Right ventricle myocardium superior (tissue), 1 donor: ENCODE measurements at regions of chr16 and their contacts with region 1.

Region 1: GRCh38 chr16:53054670-53055485 is at the start of gene CHD9:
- DNase-seq: peak; percentile 91
- ATAC-seq: peak; percentile 96
- total RNA-seq, gene CHD9: 39.5 TPM

Region 2: GRCh38 chr16:53091466-53092211 is 36.8 kb after region 1 on chr16:
- intact Hi-C with region 1: loop called (anchors 5 kb)
- DNase-seq: peak; percentile 80
- ATAC-seq: peak; percentile 50

Region 3: GRCh38 chr16:53130159-53131049 is 75.5 kb after region 1 on chr16:
- intact Hi-C with region 1: loop called (anchors 2 kb)
- DNase-seq: peak; percentile 98
- ATAC-seq: peak; percentile 93

Region 4: GRCh38 chr16:53159781-53160436 is 105.0 kb after region 1 on chr16:
- intact Hi-C with region 1: loop called (anchors 10 kb)
- DNase-seq: no peak
- ATAC-seq: peak; percentile 76

Region 5: GRCh38 chr16:53207810-53208752 is 153.2 kb after region 1 on chr16:
- intact Hi-C with region 1: loop called (anchors 5 kb)
- DNase-seq: no peak
- ATAC-seq: peak; percentile 96

Region 6: GRCh38 chr16:53282975-53283946 is 228.4 kb after region 1 on chr16:
- intact Hi-C with region 1: loop called (anchors 10 kb)
- DNase-seq: no peak
- ATAC-seq: no peak